ENCODE measurements at regions of chr20 and their contacts with region 1.

Region 1: GRCh38 chr20:20824924-20825584 is 112.6 kb upstream of the RALGAPA2 start:
- DNase-seq: peak; percentile 69 to 79 (median 73)
- H3K4me3 ChIP-seq: no peak overlapping the region
- H3K27ac ChIP-seq: no peak overlapping the region
- H3K4me1 ChIP-seq: peaks cover 0 to 22% (median 15%) of the 10 kb centered on the region in 4 experiments
- H3K27me3 ChIP-seq: peaks cover 0 to 7% (median 2%) of the 10 kb centered on the region in 5 experiments

Region 2: GRCh38 chr20:20658871-20659431 is 166.1 kb before region 1 on chr20:
- CTCF ChIA-PET with region 1: interaction called, 77 read pairs
- POLR2A ChIA-PET with region 1: no interaction called
- DNase-seq: no peak
- H3K4me3 ChIP-seq: no peak overlapping the region
- H3K27ac ChIP-seq: no peak overlapping the region
- H3K4me1 ChIP-seq: no peaks in the 10 kb centered on the region
- H3K27me3 ChIP-seq: no peaks in the 10 kb centered on the region

Region 3: GRCh38 chr20:20680991-20681508 is 144.0 kb before region 1 on chr20:
- CTCF ChIA-PET with region 1: interaction called, 15 read pairs
- POLR2A ChIA-PET with region 1: no interaction called
- DNase-seq: peak in 2 of 3 donors; percentile 48 to 58
- H3K4me3 ChIP-seq: peak overlapping the region in 3 of 7 experiments; percentile 6 to 44 (median 43)
- H3K27ac ChIP-seq: no peak overlapping the region
- H3K4me1 ChIP-seq: peaks cover 28 to 55% (median 38%) of the 10 kb centered on the region in 4 experiments
- H3K27me3 ChIP-seq: no peaks in the 10 kb centered on the region

Region 4: GRCh38 chr20:20806121-20807095 is 18.6 kb before region 1 on chr20:
- CTCF ChIA-PET with region 1: interaction called, 12 read pairs
- POLR2A ChIA-PET with region 1: interaction called, 4 read pairs
- DNase-seq: no peak
- H3K4me3 ChIP-seq: no peak overlapping the region
- H3K27ac ChIP-seq: no peak overlapping the region
- H3K4me1 ChIP-seq: peaks cover 0 to 10% (median 8%) of the 10 kb centered on the region in 4 experiments
- H3K27me3 ChIP-seq: no peaks in the 10 kb centered on the region

Region 5: DNA sequence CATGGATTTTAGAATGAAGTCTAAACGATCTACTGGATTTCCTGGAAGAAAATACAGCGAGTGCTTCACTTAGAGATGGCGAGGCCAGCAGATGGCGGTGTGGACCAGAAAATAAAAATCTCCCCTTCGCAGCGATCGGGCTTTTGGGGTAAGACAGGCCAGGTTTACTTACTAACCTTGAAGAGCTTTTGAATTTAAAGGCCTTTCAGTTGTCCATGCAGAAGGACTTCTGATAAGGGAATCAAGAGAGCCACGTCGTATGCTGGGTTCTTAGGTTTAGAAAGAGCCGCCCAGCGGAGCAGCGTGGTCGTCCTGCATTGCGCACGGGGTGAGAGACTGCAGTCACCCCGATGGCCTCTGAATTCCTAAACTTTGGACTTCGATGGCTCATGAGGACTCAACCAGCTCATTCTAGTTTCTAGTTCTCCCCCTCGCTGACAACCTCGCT is 12.5 kb after region 1 on chr20:
- CTCF ChIA-PET with region 1: interaction called, 68 read pairs
- POLR2A ChIA-PET with region 1: no interaction called
- DNase-seq: peak; percentile 67 to 81 (median 77)
- H3K4me3 ChIP-seq: peak overlapping the region in 1 of 7 experiments; percentile 36
- H3K27ac ChIP-seq: no peak overlapping the region
- H3K4me1 ChIP-seq: peaks cover 0 to 2% (median 1%) of the 10 kb centered on the region in 4 experiments
- H3K27me3 ChIP-seq: peaks cover 0 to 41% (median 9%) of the 10 kb centered on the region in 5 experiments